Caco-2 (cell line): ENCODE measurements at regions of chr4 and their contacts with region 1.

Region 1: DNA sequence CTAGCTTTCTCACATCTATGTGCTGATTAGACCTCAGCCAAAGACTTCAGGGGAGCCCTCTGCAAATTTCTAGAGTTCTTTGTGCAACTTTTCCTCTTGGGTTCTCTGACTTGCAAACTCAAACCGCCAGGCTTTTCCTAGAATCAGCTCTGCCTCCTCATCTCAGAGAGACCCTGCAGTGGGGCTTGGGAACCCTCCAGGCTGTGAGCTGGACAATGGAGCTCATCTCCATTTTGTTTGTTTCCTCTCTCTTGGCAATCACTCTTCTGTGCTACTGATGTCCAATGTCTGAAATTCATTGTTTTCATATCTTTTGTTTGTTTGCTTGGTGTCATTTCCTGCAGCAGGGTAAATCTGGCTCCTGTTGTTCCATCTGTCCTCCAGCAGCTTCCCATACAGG is 33.0 kb downstream of the GYPB start:
- DNase-seq: no peak
- H3K4me3 ChIP-seq: no peak overlapping the region
- H3K4me3 Mint-ChIP-seq: no peak overlapping the region
- H3K27ac Mint-ChIP-seq: no peak overlapping the region
- H3K4me1 ChIP-seq: no peaks in the 10 kb centered on the region
- H3K4me1 Mint-ChIP-seq: no peaks in the 10 kb centered on the region
- H3K27me3 ChIP-seq: no peaks in the 10 kb centered on the region
- H3K27me3 Mint-ChIP-seq: peaks cover 4% of the 10 kb centered on the region
- CTCF ChIP-seq: no peak

Region 2: GRCh38 chr4:144014808-144015207 is 28.6 kb after region 1 on chr4:
- CTCF ChIA-PET with region 1: no interaction called
- POLR2A ChIA-PET with region 1: no interaction called
- intact Hi-C with region 1: loop called (anchors 5 kb)
- DNase-seq: no peak
- H3K4me3 ChIP-seq: no peak overlapping the region
- H3K4me3 Mint-ChIP-seq: no peak overlapping the region
- H3K27ac Mint-ChIP-seq: no peak overlapping the region
- H3K4me1 ChIP-seq: no peaks in the 10 kb centered on the region
- H3K4me1 Mint-ChIP-seq: no peaks in the 10 kb centered on the region
- H3K27me3 ChIP-seq: no peaks in the 10 kb centered on the region
- H3K27me3 Mint-ChIP-seq: peaks cover 3% of the 10 kb centered on the region
- CTCF ChIP-seq: no peak

Region 3: DNA sequence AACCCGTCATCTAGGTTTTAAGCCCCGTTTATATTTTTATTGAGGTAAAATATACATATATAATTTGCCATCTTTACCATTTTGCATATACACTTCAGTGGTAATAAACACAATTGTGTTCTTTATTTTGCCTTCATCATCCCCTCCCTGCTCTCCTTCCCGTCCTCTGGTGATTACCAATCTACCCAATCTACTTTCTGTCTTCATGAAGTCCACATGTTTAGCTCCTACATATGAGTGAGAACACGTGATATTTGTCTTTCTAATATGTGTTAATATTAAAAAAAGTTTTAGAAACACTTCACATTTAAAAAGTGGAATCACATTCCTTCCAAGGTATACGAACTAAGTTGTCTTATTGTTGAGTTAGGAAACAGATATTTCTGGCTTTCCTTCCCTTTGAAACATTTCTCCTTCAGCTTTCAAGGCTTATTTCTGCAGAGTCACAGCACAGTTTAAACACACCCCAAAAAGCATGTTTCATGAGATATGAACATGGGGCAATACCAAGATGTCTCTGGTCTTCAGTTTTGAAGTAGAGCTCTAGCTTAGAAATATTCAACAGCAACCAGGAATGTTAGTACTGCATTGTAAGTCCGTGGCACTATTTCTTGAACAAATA is 118.4 kb after region 1 on chr4:
- CTCF ChIA-PET with region 1: no interaction called
- POLR2A ChIA-PET with region 1: no interaction called
- intact Hi-C with region 1: no loop called
- DNase-seq: no peak
- H3K4me3 ChIP-seq: no peak overlapping the region
- H3K4me3 Mint-ChIP-seq: no peak overlapping the region
- H3K27ac Mint-ChIP-seq: no peak overlapping the region
- H3K4me1 ChIP-seq: no peaks in the 10 kb centered on the region
- H3K4me1 Mint-ChIP-seq: no peaks in the 10 kb centered on the region
- H3K27me3 ChIP-seq: no peaks in the 10 kb centered on the region
- H3K27me3 Mint-ChIP-seq: peaks cover 21% of the 10 kb centered on the region
- CTCF ChIP-seq: no peak